WTC11 (cell line): ENCODE measurements at regions of chr1 and their contacts with region 1.

Region 1: DNA sequence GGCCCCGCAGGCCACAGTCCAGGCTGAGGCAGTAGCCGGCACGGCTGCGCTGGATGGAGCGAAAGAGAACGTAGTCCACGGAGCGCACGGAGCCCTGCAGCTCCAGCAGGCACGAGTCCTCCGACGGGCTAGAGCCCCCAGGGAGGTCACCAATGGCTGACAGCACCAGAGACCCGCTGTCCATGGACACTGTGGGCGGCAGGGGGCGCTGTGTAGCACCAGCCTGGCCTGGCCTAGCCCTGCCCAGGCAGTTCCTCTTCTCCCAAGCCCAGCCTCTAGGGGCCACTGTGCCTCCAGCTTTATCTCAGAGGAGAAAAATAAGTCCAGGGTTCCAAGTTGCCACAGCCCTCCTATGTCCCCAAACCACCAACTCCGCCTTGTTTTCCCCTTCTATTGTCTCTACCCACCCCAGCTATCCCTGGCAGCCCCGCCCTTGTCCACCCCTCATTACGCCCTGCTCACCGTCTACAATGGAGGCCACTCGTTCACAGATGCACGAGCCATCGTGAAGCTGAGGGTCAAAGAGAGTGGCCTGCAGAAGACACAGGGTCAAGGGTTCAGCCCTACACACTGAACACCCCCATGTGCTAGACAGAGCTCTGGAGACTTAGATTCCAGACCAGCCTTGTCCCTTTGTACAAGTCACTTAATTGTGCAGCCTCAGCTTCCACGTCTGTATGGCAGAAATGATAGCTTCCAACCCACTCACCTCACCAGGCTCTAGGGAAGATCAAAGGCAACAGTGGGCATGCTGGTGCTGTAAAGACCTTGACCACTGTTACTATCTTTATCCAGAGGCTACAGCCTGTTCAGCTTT is 4.4 kb downstream of the ENTREP3 start:
- DNase-seq: peak; percentile 99
- ATAC-seq: peak; percentile 87
- H3K4me3 Mint-ChIP-seq: peak overlapping the region; percentile 58
- H3K27ac Mint-ChIP-seq: peak overlapping the region; percentile 89
- H3K4me1 Mint-ChIP-seq: peaks cover 24% of the 10 kb centered on the region
- H3K27me3 Mint-ChIP-seq: peaks cover 16% of the 10 kb centered on the region
- CTCF ChIP-seq: peak; percentile 99

Region 2: GRCh38 chr1:155167166-155168104 is 83.4 kb before region 1 on chr1:
- CTCF ChIA-PET with region 1: interaction called, 39 read pairs
- POLR2A ChIA-PET with region 1: interaction called, 4 read pairs
- DNase-seq: peak; percentile 95
- ATAC-seq: peak; percentile 75
- H3K4me3 Mint-ChIP-seq: peak overlapping the region; percentile 89
- H3K27ac Mint-ChIP-seq: peak overlapping the region; percentile 90
- H3K4me1 Mint-ChIP-seq: peaks cover 24% of the 10 kb centered on the region
- H3K27me3 Mint-ChIP-seq: no peaks in the 10 kb centered on the region; the same call in 1 of the 2 replicates
- CTCF ChIP-seq: peak; percentile 94

Region 3: GRCh38 chr1:155208541-155209311 is 42.1 kb before region 1 on chr1 and contains the start of gene MTX1:
- CTCF ChIA-PET with region 1: interaction called, 36 read pairs
- POLR2A ChIA-PET with region 1: no interaction called
- DNase-seq: peak; percentile 88
- ATAC-seq: peak; percentile 65
- H3K4me3 Mint-ChIP-seq: peak within 1 kb of the TSS; percentile 88
- H3K27ac Mint-ChIP-seq: peak within 1 kb of the TSS; percentile 89
- H3K4me1 Mint-ChIP-seq: peaks cover 19% of the 10 kb centered on the region
- H3K27me3 Mint-ChIP-seq: peaks cover 7% of the 10 kb centered on the region; the same call in 1 of the 2 replicates
- CTCF ChIP-seq: no peak
- total RNA-seq, gene MTX1: 57.5 to 62.8 TPM (median 60.4 TPM) in 3 replicates

Region 4: GRCh38 chr1:155261852-155262673 is 11.2 kb after region 1 on chr1 and contains the start of gene SCAMP3:
- CTCF ChIA-PET with region 1: interaction called, 130 read pairs
- POLR2A ChIA-PET with region 1: interaction called, 3 read pairs
- DNase-seq: peak; percentile 92
- ATAC-seq: peak; percentile 94
- H3K4me3 Mint-ChIP-seq: peak within 1 kb of the TSS; percentile 96
- H3K27ac Mint-ChIP-seq: peak within 1 kb of the TSS; percentile 97
- H3K4me1 Mint-ChIP-seq: peaks cover 14% of the 10 kb centered on the region
- H3K27me3 Mint-ChIP-seq: no peaks in the 10 kb centered on the region
- CTCF ChIP-seq: no peak
- total RNA-seq, gene SCAMP3: 50.0 to 58.8 TPM (median 52.2 TPM) in 3 replicates

Region 5: DNA sequence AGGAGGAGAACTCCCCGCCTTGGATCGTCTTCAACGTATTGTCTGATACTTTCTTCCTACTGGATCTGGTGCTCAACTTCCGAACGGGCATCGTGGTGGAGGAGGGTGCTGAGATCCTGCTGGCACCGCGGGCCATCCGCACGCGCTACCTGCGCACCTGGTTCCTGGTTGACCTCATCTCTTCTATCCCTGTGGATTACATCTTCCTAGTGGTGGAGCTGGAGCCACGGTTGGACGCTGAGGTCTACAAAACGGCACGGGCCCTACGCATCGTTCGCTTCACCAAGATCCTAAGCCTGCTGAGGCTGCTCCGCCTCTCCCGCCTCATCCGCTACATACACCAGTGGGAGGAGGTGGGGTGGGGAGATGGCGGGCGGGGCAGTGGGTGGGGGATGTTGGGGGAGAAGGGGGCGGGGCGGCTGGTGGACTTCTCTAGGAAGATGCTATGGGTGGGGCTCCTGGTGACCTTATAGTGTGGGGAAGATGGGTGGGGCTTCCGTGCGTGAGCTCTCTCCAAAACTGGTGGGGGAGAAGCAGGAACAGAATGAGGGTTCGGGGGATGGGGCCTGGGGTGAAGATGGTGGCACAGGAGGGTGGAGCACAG is 31.7 kb after region 1 on chr1:
- CTCF ChIA-PET with region 1: interaction called, 47 read pairs
- POLR2A ChIA-PET with region 1: no interaction called
- DNase-seq: no peak
- ATAC-seq: no peak
- H3K4me3 Mint-ChIP-seq: no peak overlapping the region
- H3K27ac Mint-ChIP-seq: no peak overlapping the region
- H3K4me1 Mint-ChIP-seq: peaks cover 13% of the 10 kb centered on the region
- H3K27me3 Mint-ChIP-seq: no peaks in the 10 kb centered on the region
- CTCF ChIP-seq: no peak

Region 6: DNA sequence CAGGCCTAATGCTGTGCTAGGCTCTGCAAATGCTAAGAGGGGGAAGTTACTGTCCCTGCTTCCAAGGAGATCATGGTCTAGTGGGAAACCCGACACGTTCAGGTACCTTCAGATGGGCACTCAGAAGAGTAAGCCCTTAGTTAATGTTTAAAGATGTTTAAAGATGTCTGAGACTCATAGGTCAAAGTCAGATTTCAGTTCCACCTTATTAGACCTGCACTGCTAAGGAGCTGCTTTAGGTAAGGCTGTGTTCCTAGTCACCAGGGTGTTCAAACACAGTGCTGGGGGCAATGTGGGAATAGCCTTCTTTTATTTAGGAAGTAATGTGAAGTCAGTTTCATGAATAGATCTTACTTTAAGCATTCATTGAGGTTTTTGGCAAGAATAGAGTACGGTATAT is 66.1 kb after region 1 on chr1:
- CTCF ChIA-PET with region 1: interaction called, 204 read pairs
- POLR2A ChIA-PET with region 1: interaction called, 5 read pairs
- DNase-seq: no peak
- ATAC-seq: no peak
- H3K4me3 Mint-ChIP-seq: no peak overlapping the region
- H3K27ac Mint-ChIP-seq: no peak overlapping the region
- H3K4me1 Mint-ChIP-seq: peaks cover 26% of the 10 kb centered on the region
- H3K27me3 Mint-ChIP-seq: no peaks in the 10 kb centered on the region
- CTCF ChIP-seq: no peak

Region 7: DNA sequence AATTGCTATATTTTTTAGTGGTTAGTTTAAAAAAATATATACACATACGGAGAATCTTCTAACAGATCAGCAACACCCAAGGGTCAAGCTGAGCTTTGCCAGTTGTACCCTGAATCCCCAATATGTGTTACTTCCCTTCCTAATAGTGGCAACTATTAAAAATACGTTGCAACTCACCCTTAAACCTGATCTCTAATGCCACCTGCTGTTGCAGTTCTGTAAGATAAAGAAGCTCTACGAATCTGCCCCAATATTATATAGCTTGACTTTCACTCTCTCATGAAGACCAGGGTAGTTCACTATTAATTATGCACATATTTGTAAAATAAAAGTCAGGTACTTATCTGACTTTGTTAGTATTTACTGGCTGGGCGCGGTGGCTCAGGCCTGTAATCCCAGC is 253.4 kb after region 1 on chr1:
- CTCF ChIA-PET with region 1: interaction called, 12 read pairs
- POLR2A ChIA-PET with region 1: no interaction called
- DNase-seq: no peak
- ATAC-seq: 0 out of 2 replicates have a peak, but pooled peaks have one; percentile 32
- H3K4me3 Mint-ChIP-seq: no peak overlapping the region
- H3K27ac Mint-ChIP-seq: 0 out of 2 replicates have a peak overlapping the region, but pooled peaks have one; percentile 53
- H3K4me1 Mint-ChIP-seq: peaks cover 16% of the 10 kb centered on the region
- H3K27me3 Mint-ChIP-seq: no peaks in the 10 kb centered on the region
- CTCF ChIP-seq: no peak